ENCODE measurements at regions of chr17 and their contacts with region 1.

Region 1: GRCh38 chr17:78674595-78675315 is 97.6 kb upstream of the DNAH17 start:
- DNase-seq: peak in 1 of 2 donors; percentile 48
- ATAC-seq: no peak
- H3K4me3 ChIP-seq: no peak overlapping the region
- H3K27ac ChIP-seq: peak overlapping the region; percentile 45 to 86 (median 55)
- H3K4me1 ChIP-seq: peaks cover 53 to 72% of the 10 kb centered on the region in 2 donors
- H3K27me3 ChIP-seq: no peaks in the 10 kb centered on the region
- CTCF ChIP-seq: no peak
- POLR2A ChIP-seq: no peak

Region 2: DNA sequence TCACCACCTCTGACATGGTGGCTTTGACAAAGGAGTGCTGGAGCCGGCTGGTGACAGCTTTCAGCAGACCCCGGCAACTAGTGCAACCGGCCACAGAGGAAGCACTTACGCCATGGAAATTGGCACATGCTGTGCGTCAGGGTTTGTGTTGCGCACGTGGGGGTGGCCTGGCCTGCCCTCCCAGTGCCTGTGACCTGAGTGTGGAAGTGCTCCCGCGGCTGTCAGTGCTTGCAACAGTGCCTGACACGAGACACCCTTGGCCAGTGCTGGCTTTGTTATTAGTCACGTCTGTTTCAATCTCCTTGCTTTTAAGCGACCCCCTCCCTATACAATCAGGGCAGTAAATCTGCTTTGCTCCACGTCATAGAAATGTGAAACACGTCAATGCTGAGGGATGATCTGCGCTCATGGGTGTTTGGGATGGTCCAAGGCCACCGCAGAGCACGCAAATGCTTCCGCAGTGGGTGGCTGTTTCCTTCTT is 232.1 kb before region 1 on chr17:
- in situ Hi-C with region 1: no loop called
- intact Hi-C with region 1: loop called (anchors 5 kb)
- DNase-seq: peak; percentile 75 to 91
- ATAC-seq: peak; percentile 82 to 89
- H3K4me3 ChIP-seq: no peak overlapping the region
- H3K27ac ChIP-seq: peak overlapping the region; percentile 44 to 75 (median 59)
- H3K4me1 ChIP-seq: peaks cover 9 to 19% of the 10 kb centered on the region in 2 donors
- H3K27me3 ChIP-seq: no peaks in the 10 kb centered on the region
- CTCF ChIP-seq: peak in 1 of 5 experiments; percentile 26
- POLR2A ChIP-seq: peak; percentile 26 to 51

Region 3: DNA sequence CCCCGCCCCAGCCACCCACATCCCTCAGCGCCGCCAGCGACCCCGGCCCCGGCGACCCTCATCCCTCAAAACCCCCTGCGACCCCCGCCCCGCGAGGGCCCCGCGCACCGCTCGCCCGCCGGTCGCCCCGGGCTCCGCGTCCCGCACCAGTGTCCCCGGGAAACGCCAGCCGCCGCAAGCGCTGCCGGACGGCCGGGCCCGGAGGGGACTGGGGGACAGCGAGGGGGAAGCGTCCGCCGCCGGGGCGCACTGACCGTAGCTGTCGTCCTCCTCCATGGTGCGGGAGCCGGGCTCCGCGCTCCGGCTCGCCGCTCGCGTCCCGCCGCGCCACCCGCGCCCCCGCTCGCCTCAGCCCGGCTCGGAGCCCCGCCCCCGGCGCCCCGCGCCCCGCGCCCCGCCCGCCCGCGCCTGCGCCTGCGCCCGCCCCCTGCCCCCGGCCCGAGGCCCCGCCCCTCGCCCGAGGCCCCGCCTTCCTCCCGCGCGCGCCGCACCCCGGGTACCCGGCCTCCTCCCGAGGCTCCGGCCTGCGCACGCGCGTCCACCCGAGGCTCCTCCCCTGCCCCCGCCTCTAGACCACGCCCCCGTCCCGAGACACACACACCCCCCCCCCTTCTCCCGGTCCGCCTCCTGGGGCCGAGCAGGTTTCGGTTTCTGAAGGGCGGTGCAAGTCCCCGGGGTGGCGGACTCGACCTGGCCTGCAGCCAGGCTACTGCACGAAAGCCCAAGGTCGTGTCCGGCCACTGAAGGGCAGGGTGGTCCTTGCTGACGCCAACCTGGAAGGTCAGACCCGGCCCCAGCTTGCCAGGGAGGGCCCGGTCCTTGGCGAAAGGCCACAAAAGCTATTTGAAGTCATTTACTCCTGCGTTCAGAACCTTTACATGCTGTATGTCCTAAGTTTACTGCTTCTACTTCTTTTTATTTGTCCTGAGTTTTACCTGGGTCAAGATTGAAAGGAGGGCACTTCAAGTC is 107.5 kb after region 1 on chr17 and contains the start of gene CYTH1:
- in situ Hi-C with region 1: no loop called
- intact Hi-C with region 1: loop called (anchors 5 kb)
- DNase-seq: peak; percentile 94 to 97
- ATAC-seq: peak; percentile 69 to 82
- H3K4me3 ChIP-seq: peak within 1 kb of the TSS; percentile 61 to 98 (median 90)
- H3K27ac ChIP-seq: peak within 1 kb of the TSS; percentile 86 to 99 (median 98)
- H3K4me1 ChIP-seq: peaks cover 24 to 27% of the 10 kb centered on the region in 2 donors
- H3K27me3 ChIP-seq: no peaks in the 10 kb centered on the region
- CTCF ChIP-seq: no peak
- POLR2A ChIP-seq: peak; percentile 82 to 90
- total RNA-seq, gene CYTH1: 24.7 to 43.7 (median 32.4) TPM

Region 4: GRCh38 chr17:78798695-78799559 is 124.2 kb after region 1 on chr17:
- in situ Hi-C with region 1: no loop called
- intact Hi-C with region 1: loop called (anchors 2 kb)
- DNase-seq: no peak
- ATAC-seq: peak; percentile 46 to 72
- H3K4me3 ChIP-seq: no peak overlapping the region
- H3K27ac ChIP-seq: peak overlapping the region in 3 of 4 donors; percentile 17 to 39 (median 32)
- H3K4me1 ChIP-seq: peaks cover 28 to 32% of the 10 kb centered on the region in 2 donors
- H3K27me3 ChIP-seq: no peaks in the 10 kb centered on the region
- CTCF ChIP-seq: peak; percentile 41 to 67 (median 61)
- POLR2A ChIP-seq: no peak

Region 5: DNA sequence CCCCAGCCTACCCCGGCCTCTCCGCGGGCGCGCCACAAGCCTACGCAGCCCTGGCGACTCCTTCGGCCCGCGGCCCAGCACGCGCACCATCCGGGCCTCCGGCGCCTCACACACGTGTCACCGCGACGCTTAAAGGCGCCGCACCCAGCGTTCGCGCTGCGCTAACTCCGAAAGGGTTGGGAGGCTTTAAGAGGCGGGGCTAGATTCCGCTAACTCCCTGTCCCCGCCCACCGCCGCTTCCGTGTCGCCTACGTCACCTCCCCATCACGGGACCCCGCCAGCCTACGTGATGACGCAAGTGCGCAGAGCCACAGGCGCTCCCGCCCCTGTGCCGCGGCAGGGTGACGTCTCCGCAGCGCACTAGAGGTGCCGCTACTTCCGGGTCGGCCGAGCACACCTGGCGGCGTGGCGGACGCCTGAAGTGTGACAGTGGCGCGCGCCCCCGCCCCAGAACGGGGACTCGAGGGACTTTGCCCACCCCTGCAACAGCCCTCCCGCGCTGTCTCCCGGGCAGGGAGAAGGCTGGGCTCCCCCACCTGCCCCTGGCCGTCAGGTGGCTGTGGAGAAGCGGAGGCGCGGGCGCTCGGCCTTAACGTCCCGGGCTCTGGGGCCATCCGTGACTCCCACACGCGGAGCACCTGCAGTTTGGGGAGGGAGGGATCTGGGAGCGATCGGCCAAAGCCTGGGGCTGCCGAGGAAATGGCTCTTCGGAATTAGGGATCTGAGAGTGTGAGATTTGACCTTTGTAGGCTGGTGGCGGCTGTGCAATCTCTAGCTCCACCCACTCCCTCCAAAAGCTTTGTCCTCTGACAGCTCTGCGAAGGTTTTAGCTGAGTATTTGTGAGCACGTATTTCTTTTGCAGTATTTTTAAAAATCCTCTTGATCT is 166.2 kb after region 1 on chr17 and contains the start of gene USP36:
- in situ Hi-C with region 1: no loop called
- intact Hi-C with region 1: loop called (anchors 5 kb)
- DNase-seq: peak; percentile 99
- ATAC-seq: peak; percentile 93 to 95
- H3K4me3 ChIP-seq: peak within 1 kb of the TSS; percentile 86 to 94 (median 89)
- H3K27ac ChIP-seq: peak within 1 kb of the TSS; percentile 91 to 97 (median 96)
- H3K4me1 ChIP-seq: peaks cover 13 to 18% of the 10 kb centered on the region in 2 donors
- H3K27me3 ChIP-seq: no peaks in the 10 kb centered on the region
- CTCF ChIP-seq: peak in 2 of 5 experiments; percentile 32 to 66
- POLR2A ChIP-seq: peak; percentile 97
- total RNA-seq, gene USP36: 15.2 to 21.1 (median 20.0) TPM

Measured in gastrocnemius medialis (tissue), 4 donors.